Motor neuron (in vitro differentiated cells): ENCODE measurements at regions of chr2 and their contacts with region 1.

Region 1: DNA sequence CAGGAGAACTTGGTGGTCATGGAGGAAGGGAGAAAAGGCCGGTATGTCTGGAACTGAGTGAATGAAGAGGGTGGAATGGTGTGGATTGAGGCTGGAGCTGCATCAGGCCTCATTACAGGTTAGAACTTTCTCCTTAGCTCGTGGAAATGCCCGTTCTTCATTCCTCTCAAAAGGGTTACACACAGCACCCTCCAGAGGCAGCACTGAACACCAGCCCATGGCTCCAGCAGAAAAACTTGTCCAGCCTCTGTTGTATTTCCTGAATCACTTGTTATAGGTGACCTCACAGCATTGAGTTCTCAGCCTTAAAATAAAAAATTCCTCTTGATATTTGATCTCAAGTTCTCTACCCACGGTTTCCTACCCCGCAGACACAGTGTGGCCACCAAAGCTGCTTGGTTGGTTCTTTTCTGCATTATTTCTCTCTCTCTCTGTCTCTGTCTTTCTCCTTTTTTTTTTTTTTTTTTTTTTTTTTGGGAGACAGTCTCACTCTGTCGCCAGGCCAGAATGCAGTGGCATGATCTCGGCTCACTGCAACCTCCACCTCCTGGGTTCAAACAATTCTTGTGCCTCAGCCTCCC is 89.6 kb downstream of the ITGB1BP1 start:
- ATAC-seq: peak; percentile 56 to 95 (median 72)
- H3K4me3 ChIP-seq: no peak overlapping the region
- H3K27ac ChIP-seq: no peak overlapping the region
- H3K4me1 ChIP-seq: peaks cover 0 to 9% of the 10 kb centered on the region in 2 donors

Region 2: DNA sequence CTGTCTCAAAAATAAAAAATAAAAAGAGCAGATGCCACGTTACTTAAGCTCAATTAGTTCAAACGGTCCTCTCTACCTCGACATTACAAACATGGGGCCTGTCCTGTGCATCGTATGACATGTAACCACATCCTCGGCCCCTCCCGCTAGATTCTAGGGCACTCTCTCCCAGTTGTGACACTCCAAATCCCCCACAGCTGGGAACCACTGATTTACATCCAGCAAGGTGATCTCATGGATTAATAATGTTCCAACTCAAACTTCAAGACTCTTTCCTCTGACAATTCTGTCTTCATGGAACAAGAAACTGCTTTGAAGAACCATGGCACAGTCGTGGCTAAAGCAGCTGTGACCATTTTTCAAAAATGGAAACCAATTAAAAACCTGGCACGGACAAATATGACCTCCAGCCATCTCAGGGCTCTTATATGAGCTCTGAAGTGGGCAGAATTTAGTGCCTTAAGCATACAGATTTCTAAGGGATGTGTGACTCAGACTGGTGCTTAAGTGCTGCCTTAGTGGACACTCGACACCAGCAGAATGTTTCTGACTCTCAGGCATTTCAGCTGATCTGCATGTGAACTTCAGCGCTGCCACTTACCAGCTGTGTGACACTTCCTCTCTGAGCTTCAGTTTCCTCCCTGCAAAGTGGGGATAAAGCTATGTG is 158.8 kb before region 1 on chr2:
- in situ Hi-C with region 1: loop called in 2 of 9 experiments (anchors 25 kb)
- ATAC-seq: peak in 3 of 8 experiments; percentile 6 to 70 (median 51)
- H3K4me3 ChIP-seq: no peak overlapping the region
- H3K27ac ChIP-seq: no peak overlapping the region
- H3K4me1 ChIP-seq: peaks cover 14 to 17% of the 10 kb centered on the region in 2 donors

Region 3: GRCh38 chr2:9230881-9231670 is 102.6 kb before region 1 on chr2:
- in situ Hi-C with region 1: no loop called
- ATAC-seq: no peak
- H3K4me3 ChIP-seq: no peak overlapping the region
- H3K27ac ChIP-seq: peak overlapping the region in 1 of 2 donors; percentile 36
- H3K4me1 ChIP-seq: peaks cover 76 to 80% of the 10 kb centered on the region in 2 donors

Region 4: GRCh38 chr2:9378433-9379390 is 45.0 kb after region 1 on chr2:
- in situ Hi-C with region 1: no loop called
- ATAC-seq: peak in 7 of 8 experiments; percentile 60 to 89 (median 79)
- H3K4me3 ChIP-seq: no peak overlapping the region
- H3K27ac ChIP-seq: no peak overlapping the region
- H3K4me1 ChIP-seq: no peaks in the 10 kb centered on the region

Region 5: GRCh38 chr2:10239561-10239967 is 905.9 kb after region 1 on chr2:
- in situ Hi-C with region 1: no loop called
- ATAC-seq: peak in 6 of 8 experiments; percentile 22 to 83 (median 81)
- H3K4me3 ChIP-seq: no peak overlapping the region
- H3K27ac ChIP-seq: no peak overlapping the region
- H3K4me1 ChIP-seq: peaks cover 9 to 13% of the 10 kb centered on the region in 2 donors